ENCODE measurements at regions of chr22 and their contacts with region 1.

Region 1: GRCh38 chr22:37237371-37238268 is 6.4 kb downstream of the RAC2 start:
- DNase-seq: peak; percentile 34
- ATAC-seq: no peak
- H3K4me3 Mint-ChIP-seq: peak overlapping the region; percentile 92
- H3K27ac Mint-ChIP-seq: peak overlapping the region; percentile 94
- H3K4me1 Mint-ChIP-seq: peaks cover 88% of the 10 kb centered on the region
- H3K27me3 Mint-ChIP-seq: no peaks in the 10 kb centered on the region

Region 2: GRCh38 chr22:37218771-37219411 is 18.7 kb before region 1 on chr22:
- CTCF ChIA-PET with region 1: interaction called, 29 read pairs
- POLR2A ChIA-PET with region 1: interaction called, 13 read pairs
- intact Hi-C with region 1: loop called (anchors 1 to 2 kb)
- DNase-seq: peak; percentile 83
- ATAC-seq: peak; percentile 68
- H3K4me3 Mint-ChIP-seq: peak overlapping the region; percentile 78
- H3K27ac Mint-ChIP-seq: peak overlapping the region; percentile 94
- H3K4me1 Mint-ChIP-seq: peaks cover 79% of the 10 kb centered on the region
- H3K27me3 Mint-ChIP-seq: no peaks in the 10 kb centered on the region